ENCODE measurements at regions of chr14 and their contacts with region 1.

Region 1: GRCh38 chr14:103104654-103105452 is 10.3 kb downstream of the EXOC3L4 start:
- DNase-seq: peak; percentile 82
- ATAC-seq: peak; percentile 75
- H3K4me3 ChIP-seq: peak overlapping the region; percentile 63
- H3K27ac ChIP-seq: no peak overlapping the region
- H3K4me1 ChIP-seq: peaks cover 19% of the 10 kb centered on the region
- H3K27me3 ChIP-seq: peaks cover 7% of the 10 kb centered on the region; the same call in 1 of the 2 replicates
- CTCF ChIP-seq: peak; percentile 97

Region 2: DNA sequence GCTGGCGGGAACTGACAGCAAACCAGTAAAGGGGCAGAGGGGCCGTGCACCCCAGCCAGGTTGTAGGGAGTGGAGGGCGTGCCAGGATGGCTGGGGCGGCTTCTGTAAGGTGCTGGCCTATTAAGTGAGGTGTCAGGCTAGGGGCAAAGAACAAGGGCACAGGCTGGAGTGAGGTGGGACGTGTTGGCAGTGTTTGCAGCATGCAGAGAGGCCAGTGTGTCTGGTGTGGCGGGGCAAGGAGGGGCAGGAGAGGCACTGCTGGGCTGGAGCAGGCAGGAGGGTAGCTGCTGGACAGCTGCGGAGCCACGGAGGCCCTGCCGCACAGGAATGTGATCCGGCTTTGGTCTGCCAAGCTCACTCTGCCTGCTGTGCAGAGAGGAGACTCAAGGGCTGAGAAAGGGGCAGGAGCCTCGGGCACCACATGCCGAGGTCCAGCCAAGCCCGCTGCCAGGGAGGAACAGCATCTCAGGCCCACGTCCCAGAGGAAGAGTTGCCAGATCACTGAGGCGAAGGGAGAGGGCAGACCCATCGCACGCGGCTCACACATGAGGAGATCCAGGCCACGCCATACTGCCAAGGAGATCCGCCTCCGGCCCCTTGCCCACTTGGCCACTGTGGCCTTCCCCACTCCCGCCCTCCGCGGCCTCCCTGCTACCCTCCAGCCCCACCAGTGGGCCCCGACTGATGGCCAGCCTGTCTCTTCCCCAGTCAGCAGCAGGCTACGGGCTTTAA is 135.6 kb before region 1 on chr14:
- CTCF ChIA-PET with region 1: interaction called, 13 read pairs
- POLR2A ChIA-PET with region 1: no interaction called
- intact Hi-C with region 1: no loop called
- DNase-seq: no peak
- ATAC-seq: no peak
- H3K4me3 ChIP-seq: no peak overlapping the region
- H3K27ac ChIP-seq: no peak overlapping the region
- H3K4me1 ChIP-seq: no peaks in the 10 kb centered on the region
- H3K27me3 ChIP-seq: no peaks in the 10 kb centered on the region
- CTCF ChIP-seq: no peak

Region 3: GRCh38 chr14:103141119-103141796 is 36.4 kb after region 1 on chr14:
- CTCF ChIA-PET with region 1: interaction called, 5 read pairs
- POLR2A ChIA-PET with region 1: no interaction called
- intact Hi-C with region 1: loop called (anchors 5 kb)
- DNase-seq: peak; percentile 76
- ATAC-seq: no peak
- H3K4me3 ChIP-seq: no peak overlapping the region
- H3K27ac ChIP-seq: no peak overlapping the region
- H3K4me1 ChIP-seq: peaks cover 32% of the 10 kb centered on the region
- H3K27me3 ChIP-seq: no peaks in the 10 kb centered on the region
- CTCF ChIP-seq: peak; percentile 84

Region 4: DNA sequence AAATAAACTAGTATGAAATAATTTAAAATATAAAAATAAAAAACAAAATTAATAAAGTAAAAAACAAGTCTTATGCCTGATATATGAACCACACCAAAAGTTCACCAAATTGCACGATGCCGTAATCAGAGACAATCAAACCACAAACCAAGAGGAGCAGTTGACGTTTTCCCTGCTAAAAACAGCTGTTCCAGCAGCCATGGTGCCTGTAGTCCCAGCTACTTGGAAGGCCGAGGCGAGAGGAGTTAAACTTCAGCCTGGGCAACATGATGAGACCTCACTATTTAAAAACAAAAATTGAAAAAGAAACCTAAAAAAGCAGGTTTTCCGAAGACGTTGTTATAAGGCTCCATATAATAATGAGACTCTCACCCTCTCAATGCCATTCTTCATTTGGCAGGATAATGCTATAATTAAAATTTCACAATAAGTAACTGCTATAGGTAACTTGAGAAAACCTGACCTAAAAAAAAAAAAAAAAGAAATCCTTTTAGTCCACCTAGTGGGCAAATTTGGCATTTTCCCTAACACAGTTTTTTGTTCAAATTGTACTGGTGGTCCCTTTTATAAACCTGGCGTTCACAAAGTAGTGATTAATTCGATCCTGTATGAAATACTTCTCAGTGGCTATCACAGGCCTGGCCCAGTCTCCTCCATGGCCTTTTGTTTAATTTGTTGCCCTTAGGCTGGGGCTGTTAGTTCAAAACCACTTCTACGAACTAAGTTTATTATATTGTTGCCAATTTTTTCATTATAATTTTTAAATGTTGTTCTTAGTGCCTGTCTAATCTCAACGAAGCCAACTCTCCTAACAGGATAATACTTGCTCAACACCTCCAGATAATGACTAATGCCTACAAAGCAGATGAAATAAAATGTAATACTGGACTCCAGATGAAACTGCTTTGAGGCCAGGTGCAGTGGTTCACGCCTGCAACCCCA is 80.5 kb after region 1 on chr14:
- CTCF ChIA-PET with region 1: interaction called, 11 read pairs
- POLR2A ChIA-PET with region 1: no interaction called
- intact Hi-C with region 1: loop called (anchors 2 kb)
- DNase-seq: peak; percentile 80
- ATAC-seq: no peak
- H3K4me3 ChIP-seq: no peak overlapping the region
- H3K27ac ChIP-seq: no peak overlapping the region
- H3K4me1 ChIP-seq: no peaks in the 10 kb centered on the region
- H3K27me3 ChIP-seq: no peaks in the 10 kb centered on the region
- CTCF ChIP-seq: peak; percentile 78

Region 5: GRCh38 chr14:103281496-103282231 is 176.8 kb after region 1 on chr14:
- CTCF ChIA-PET with region 1: interaction called, 12 read pairs
- POLR2A ChIA-PET with region 1: no interaction called
- intact Hi-C with region 1: no loop called
- DNase-seq: peak; percentile 63
- ATAC-seq: peak; percentile 76
- H3K4me3 ChIP-seq: no peak overlapping the region
- H3K27ac ChIP-seq: no peak overlapping the region
- H3K4me1 ChIP-seq: peaks cover 8% of the 10 kb centered on the region
- H3K27me3 ChIP-seq: no peaks in the 10 kb centered on the region
- CTCF ChIP-seq: peak; percentile 54

Region 6: DNA sequence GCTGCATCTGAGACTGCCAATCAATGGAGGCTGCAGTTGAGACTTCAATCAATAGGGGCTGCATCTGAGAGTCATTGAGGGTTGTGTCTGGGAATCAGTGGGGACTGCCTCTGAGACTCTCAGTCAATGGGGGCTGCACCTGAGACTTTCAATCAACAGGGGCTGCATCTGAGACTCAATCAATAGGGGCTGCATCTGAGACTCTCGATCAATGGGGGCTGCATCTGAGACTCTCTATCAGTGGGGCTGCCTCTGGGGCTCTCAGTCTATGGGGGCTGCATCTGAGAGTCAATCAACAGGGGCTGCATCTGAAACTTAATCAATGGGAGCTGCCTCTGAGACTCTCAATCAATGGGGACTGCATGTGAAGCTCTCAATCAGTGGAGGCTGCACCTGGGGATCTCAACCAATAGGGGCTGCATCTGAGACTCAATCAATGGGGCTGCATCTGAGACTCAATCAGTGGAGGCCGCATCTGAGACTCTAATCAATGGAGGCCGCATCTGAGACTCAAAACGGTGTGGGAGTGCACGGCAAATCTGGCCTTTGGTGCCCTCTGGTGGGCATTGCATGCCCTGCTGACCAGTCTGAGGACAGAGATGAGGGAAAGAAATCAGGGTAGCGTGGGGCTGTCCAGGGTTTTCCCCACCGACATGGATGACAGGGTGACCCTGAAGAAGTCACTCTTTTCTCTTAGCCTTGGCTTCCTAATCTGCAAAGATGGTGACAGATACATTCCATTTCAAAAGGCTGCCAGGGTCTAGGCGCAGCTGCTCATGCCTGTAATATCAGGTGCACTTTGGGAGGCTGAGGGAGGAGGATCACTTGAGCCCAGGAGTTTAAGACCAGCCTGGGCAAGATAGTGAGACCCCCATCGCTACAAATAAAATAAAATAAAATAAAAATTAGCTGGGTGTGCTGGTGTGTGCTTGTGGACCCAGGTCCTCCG is 187.8 kb after region 1 on chr14:
- CTCF ChIA-PET with region 1: interaction called, 6 read pairs
- POLR2A ChIA-PET with region 1: no interaction called
- intact Hi-C with region 1: loop called (anchors 1 kb)
- DNase-seq: peak; percentile 84
- ATAC-seq: peak; percentile 80
- H3K4me3 ChIP-seq: no peak overlapping the region
- H3K27ac ChIP-seq: no peak overlapping the region
- H3K4me1 ChIP-seq: peaks cover 13% of the 10 kb centered on the region
- H3K27me3 ChIP-seq: no peaks in the 10 kb centered on the region
- CTCF ChIP-seq: peak; percentile 95

Region 7: DNA sequence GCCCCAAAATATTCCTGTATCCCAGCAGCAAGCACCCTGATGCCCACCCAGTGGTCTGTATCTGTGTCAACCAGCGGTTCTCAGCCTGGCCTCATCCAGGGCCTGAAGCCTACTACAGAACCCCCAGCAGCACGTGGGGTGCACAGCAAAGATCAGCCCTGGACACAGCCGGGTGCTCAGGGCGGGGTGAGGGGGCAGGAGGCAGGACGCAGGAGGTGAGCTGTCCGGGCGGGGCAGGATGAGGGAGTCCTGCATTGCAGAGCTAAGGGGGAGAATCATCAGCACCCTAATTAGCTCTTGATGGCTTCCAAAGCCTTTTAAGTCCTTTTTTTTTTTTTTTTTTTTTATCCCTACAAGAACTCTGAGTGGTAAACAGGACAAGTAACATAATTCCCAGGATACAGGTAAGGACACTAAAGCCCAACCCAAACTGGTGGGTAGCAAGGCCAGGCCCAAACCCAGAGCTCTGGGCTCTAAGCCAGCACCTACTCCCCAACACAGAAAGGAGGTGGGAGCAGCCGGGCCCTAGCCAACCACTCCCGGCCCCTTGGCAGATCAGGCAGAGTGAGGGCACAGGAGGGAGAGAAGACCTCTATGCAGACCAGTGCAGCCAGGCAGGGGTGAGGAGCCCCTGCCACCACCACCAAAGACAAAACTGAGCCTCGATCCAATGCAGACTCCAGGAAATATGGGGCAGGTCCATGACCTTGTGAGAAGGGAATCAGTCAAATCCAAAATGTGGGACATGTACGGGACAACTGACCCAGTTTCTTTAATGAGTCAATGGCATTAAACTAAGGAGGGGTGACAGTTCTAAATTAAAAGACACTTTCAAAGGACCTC is 196.9 kb after region 1 on chr14:
- CTCF ChIA-PET with region 1: interaction called, 15 read pairs
- POLR2A ChIA-PET with region 1: no interaction called
- intact Hi-C with region 1: no loop called
- DNase-seq: peak; percentile 35
- ATAC-seq: peak; percentile 92
- H3K4me3 ChIP-seq: no peak overlapping the region
- H3K27ac ChIP-seq: peak overlapping the region; percentile 33
- H3K4me1 ChIP-seq: peaks cover 14% of the 10 kb centered on the region
- H3K27me3 ChIP-seq: no peaks in the 10 kb centered on the region
- CTCF ChIP-seq: no peak